ENCODE measurements at regions of chr18 and their contacts with region 1.

Region 1: DNA sequence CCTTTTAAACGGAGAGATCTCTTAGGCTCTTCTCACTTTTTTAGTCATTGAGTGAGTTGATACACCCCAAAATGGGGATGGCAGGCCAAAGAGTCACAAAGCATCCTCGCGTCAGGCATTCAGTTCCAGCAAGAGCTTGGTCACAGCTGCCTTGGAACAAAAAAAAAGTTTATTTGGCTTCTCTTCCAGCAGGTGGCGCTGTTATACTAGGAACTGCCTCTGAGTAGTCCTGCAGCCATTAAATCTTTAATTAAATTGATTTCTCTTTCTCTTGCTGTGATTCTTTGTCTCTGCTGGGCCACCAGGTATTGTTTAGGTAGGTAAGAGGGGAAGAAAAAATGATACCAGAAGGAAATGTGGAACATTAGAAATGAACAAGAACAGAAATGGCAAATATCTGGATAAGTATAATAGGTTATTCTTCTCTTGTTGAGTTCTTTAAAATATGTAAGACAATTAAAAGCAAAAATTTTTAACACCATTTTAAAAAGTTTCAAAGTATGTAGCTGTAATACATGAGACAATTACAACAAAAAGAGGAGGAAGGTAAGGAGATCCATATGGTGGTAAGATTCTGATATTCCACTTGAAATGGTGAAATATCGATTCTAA is 175.1 kb downstream of the GALNT1 start:
- DNase-seq: peak in 1 of 3 donors; percentile 40
- ATAC-seq: peak; percentile 78 to 84
- H3K4me3 ChIP-seq: no peak overlapping the region
- H3K27ac ChIP-seq: no peak overlapping the region
- H3K4me1 ChIP-seq: no peaks in the 10 kb centered on the region
- H3K27me3 ChIP-seq: no peaks in the 10 kb centered on the region

Region 2: GRCh38 chr18:35949903-35950627 is 193.5 kb after region 1 on chr18:
- intact Hi-C with region 1: loop called (anchors 2 to 10 kb)
- DNase-seq: peak; percentile 53 to 82 (median 78)
- ATAC-seq: peak; percentile 83 to 88
- H3K4me3 ChIP-seq: peak overlapping the region; percentile 76
- H3K27ac ChIP-seq: no peak overlapping the region
- H3K4me1 ChIP-seq: no peaks in the 10 kb centered on the region
- H3K27me3 ChIP-seq: no peaks in the 10 kb centered on the region

Measured in right cardiac atrium (tissue), 5 donors.